ENCODE measurements at regions of chr16 and their contacts with region 1.

Region 1: GRCh38 chr16:75238132-75238852 is 13.1 kb downstream of the BCAR1 start:
- DNase-seq: no peak
- ATAC-seq: no peak
- H3K4me3 ChIP-seq: no peak overlapping the region
- H3K27ac ChIP-seq: peak overlapping the region; percentile 48 to 84; a peak in 5 of 6 replicates
- H3K4me1 ChIP-seq: peaks cover 39% of the 10 kb centered on the region
- CTCF ChIP-seq: no peak
- EP300 ChIP-seq: no peak
- POLR2A ChIP-seq: no peak
- RAD21 ChIP-seq: no peak

Region 2: DNA sequence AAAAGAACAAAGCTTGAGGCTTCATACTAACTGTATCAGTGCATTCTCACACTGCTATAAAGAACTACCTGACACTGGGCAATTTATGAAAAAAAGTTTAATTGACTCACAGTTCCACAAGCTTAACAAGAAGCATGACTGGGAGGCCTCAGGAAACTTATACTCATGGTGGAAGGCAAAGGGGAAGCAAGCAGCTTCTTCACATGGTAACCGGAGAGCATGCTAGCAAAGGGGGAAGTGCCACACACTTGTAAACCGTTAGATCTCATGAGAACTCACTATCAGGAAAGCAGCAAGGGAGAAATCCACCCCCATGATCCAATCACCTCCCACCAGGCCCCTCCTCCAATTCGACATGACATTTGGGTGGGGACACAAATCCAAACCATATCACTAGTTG is 56.7 kb before region 1 on chr16:
- CTCF ChIA-PET with region 1: no interaction called
- POLR2A ChIA-PET with region 1: no interaction called
- DNase-seq: no peak
- ATAC-seq: no peak
- H3K4me3 ChIP-seq: no peak overlapping the region
- H3K27ac ChIP-seq: no peak overlapping the region
- H3K4me1 ChIP-seq: no peaks in the 10 kb centered on the region
- CTCF ChIP-seq: no peak
- EP300 ChIP-seq: no peak
- POLR2A ChIP-seq: no peak
- RAD21 ChIP-seq: no peak

Region 3: GRCh38 chr16:75198135-75198600 is 40.1 kb before region 1 on chr16:
- CTCF ChIA-PET with region 1: interaction called, 123 read pairs
- POLR2A ChIA-PET with region 1: no interaction called
- DNase-seq: no peak
- ATAC-seq: peak; percentile 22 to 44; a peak in 3 of 6 replicates
- H3K4me3 ChIP-seq: no peak overlapping the region
- H3K27ac ChIP-seq: peak overlapping the region in 1 of 2 experiments; percentile 33; a peak in 2 of 6 replicates
- H3K4me1 ChIP-seq: no peaks in the 10 kb centered on the region
- CTCF ChIP-seq: no peak
- EP300 ChIP-seq: no peak
- POLR2A ChIP-seq: no peak
- RAD21 ChIP-seq: no peak

Region 4: DNA sequence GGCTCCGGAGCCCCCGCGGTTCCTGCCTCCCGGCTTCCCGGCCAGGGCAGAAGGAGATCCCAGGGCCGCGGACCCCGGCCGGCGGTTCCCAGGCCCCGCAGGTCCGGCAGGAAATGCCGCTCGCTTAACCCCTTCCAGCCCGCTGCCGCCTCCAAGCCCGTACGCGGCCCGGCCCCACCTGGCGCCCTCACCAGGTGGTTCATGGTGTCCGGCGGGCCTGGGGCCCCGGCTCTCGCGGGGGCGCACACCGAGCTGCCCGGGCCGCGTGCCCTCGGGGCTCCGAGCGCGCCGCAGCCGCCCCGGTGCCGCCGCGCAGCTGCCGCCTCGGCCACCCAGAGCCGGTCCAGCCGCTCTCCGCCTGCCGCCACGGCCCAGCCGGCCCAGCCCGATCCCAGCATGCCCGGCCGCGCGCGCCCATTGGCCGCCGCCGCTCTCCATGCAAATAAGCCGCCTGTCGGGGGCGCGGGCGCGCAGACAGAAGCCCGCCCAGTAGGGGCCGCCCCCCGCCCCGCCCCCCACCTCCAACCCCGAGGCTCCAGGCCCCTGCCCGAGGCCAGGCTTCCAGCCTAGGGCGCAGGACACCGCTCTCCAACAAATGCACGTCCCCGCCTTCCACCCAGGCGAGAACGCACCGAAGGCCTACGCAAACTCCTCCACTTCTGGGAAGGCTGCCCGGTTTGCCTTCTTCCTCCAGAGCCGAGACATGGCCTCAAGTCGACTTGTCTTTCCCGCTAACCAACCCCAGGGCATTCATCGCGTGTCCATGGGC is 13.2 kb after region 1 on chr16 and contains the start of gene BCAR1:
- CTCF ChIA-PET with region 1: interaction called, 139 read pairs
- POLR2A ChIA-PET with region 1: interaction called, 4 read pairs
- DNase-seq: peak; percentile 85 to 87
- ATAC-seq: peak; percentile 69 to 77
- H3K4me3 ChIP-seq: peak within 1 kb of the TSS; percentile 74
- H3K27ac ChIP-seq: peak within 1 kb of the TSS; percentile 89 to 99
- H3K4me1 ChIP-seq: peaks cover 83% of the 10 kb centered on the region
- CTCF ChIP-seq: no peak; the same call in 2 of the 3 replicates
- EP300 ChIP-seq: no peak
- POLR2A ChIP-seq: peak; percentile 65
- RAD21 ChIP-seq: no peak
- polyA plus RNA-seq, gene BCAR1: 8.3 and 10.2 TPM in 2 replicates

Region 5: GRCh38 chr16:75282466-75283288 is 44.4 kb after region 1 on chr16:
- CTCF ChIA-PET with region 1: interaction called, 11 read pairs
- POLR2A ChIA-PET with region 1: no interaction called
- DNase-seq: no peak
- ATAC-seq: peak in 1 of 2 experiments; percentile 33; a peak in 2 of 6 replicates
- H3K4me3 ChIP-seq: no peak overlapping the region
- H3K27ac ChIP-seq: no peak overlapping the region
- H3K4me1 ChIP-seq: no peaks in the 10 kb centered on the region
- CTCF ChIP-seq: no peak
- EP300 ChIP-seq: no peak
- POLR2A ChIP-seq: no peak
- RAD21 ChIP-seq: no peak

Region 6: DNA sequence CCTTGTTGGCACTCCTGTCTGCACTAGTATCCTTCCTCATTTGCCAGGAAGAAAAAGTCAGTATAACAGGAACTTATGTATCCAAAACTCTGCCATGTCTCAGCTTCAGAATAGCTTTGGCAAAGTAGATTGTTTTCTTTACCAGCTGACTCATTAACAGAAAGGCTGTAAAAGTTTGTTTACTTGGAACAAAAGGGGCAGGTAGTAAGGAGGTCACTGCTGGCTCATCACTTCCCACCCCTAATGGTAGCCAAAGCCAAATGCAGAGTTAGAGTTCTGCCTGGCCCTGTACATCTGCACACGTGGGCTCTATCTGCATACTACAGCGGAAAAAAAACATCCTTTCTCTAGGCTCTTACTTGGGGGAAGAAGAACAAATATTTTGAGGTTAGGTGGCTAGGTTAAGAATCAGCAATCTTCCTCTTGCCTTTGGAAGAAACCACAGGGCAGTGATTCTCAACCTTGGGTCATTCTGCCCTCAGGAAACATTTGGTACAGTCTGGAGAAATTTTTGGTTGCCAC is 104.1 kb after region 1 on chr16:
- CTCF ChIA-PET with region 1: interaction called, 10 read pairs
- POLR2A ChIA-PET with region 1: no interaction called
- DNase-seq: peak in 1 of 2 experiments; percentile 6
- ATAC-seq: peak; percentile 34 to 60; a peak in 3 of 6 replicates
- H3K4me3 ChIP-seq: no peak overlapping the region
- H3K27ac ChIP-seq: 0 out of 6 replicates have a peak overlapping the region, but pooled peaks of 1 of the 2 experiments have one; percentile 5
- H3K4me1 ChIP-seq: peaks cover 27% of the 10 kb centered on the region
- CTCF ChIP-seq: no peak
- EP300 ChIP-seq: no peak
- POLR2A ChIP-seq: no peak
- RAD21 ChIP-seq: no peak

Region 7: GRCh38 chr16:75379911-75380847 is 141.9 kb after region 1 on chr16:
- CTCF ChIA-PET with region 1: interaction called, 171 read pairs
- POLR2A ChIA-PET with region 1: no interaction called
- DNase-seq: no peak
- ATAC-seq: no peak
- H3K4me3 ChIP-seq: no peak overlapping the region
- H3K27ac ChIP-seq: no peak overlapping the region
- H3K4me1 ChIP-seq: peaks cover 15% of the 10 kb centered on the region
- CTCF ChIP-seq: no peak
- EP300 ChIP-seq: no peak
- POLR2A ChIP-seq: no peak
- RAD21 ChIP-seq: no peak

Region 8: DNA sequence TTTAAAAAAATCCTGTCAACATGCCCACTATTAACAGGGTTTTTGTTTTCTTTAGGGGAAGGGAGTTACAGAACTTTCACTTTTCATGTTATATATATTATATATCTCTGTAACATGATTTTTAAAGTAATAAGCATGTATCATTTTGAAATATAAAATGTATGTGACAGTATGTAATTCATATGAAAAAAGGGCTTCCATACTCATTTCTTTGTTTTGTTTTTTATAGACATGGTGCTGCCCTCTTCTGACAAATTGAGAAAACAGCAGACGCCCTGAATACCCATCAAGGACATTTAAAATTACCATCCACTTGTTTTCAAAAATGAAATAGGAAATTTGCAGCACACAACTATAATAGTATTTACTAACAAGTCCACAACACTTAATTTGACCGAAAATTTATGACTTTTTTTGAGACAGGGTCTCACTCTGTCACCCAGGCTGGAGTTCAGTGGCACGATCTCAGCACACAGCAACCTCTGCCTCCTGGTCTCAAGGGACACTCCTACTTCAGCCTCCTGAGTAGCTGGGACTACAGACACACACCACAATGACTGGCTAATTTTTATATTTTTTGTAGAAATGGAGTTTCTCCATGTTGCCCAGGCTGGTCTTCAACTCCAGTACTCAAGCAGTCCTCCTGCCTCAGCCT is 164.7 kb after region 1 on chr16:
- CTCF ChIA-PET with region 1: interaction called, 124 read pairs
- POLR2A ChIA-PET with region 1: interaction called, 4 read pairs
- DNase-seq: peak; percentile 33 to 44
- ATAC-seq: peak in 1 of 2 experiments; percentile 64; a peak in 2 of 6 replicates
- H3K4me3 ChIP-seq: no peak overlapping the region
- H3K27ac ChIP-seq: no peak overlapping the region
- H3K4me1 ChIP-seq: no peaks in the 10 kb centered on the region
- CTCF ChIP-seq: peak; percentile 77
- EP300 ChIP-seq: no peak
- POLR2A ChIP-seq: no peak
- RAD21 ChIP-seq: peak; percentile 58 to 67

Measured in A549 (cell line).